Esophagus squamous epithelium (tissue), 5 donors: ENCODE measurements at regions of chr12 and their contacts with region 1.

Region 1: GRCh38 chr12:13211859-13212664 is 15.5 kb downstream of the EMP1 start:
- DNase-seq: no peak
- H3K4me3 ChIP-seq: no peak overlapping the region
- H3K27ac ChIP-seq: peak overlapping the region; percentile 19 to 97 (median 58)
- H3K4me1 ChIP-seq: peaks cover 10 to 58% (median 47%) of the 10 kb centered on the region in 3 donors
- H3K27me3 ChIP-seq: no peaks in the 10 kb centered on the region
- CTCF ChIP-seq: peak; percentile 65 to 74 (median 70)
- POLR2A ChIP-seq: no peak

Region 2: DNA sequence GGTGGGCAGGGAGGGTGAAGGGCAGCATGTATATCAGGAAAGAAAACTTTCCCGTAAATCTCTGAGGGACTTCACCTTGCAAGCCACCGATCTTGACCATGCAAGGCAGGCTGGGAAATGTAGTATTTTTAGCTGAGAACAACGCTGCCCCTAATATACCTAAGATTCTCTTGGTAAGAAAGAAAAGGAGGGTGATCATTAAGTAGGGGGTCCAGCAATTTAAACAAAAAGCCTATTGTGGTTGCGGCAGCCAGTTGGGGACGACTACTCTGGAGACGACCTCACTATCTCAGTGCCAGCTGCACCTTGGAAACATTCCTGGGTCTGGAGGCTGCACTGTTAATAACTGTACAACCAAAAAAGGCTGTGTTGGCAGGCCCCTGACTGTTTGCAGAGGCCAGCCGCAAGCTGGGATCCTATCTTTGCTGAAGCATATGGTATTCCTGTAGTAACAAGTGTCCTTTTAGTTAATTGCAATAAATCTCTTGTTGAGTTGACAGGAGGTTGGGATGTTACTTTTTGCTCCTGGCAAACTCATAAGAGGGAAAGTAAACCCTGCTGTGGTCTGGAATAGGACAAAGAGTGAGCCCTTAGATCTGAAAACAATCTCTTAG is 420.2 kb before region 1 on chr12:
- intact Hi-C with region 1: loop called (anchors 10 kb)
- DNase-seq: no peak
- H3K4me3 ChIP-seq: peak overlapping the region in 3 of 4 donors; percentile 4 to 39 (median 6)
- H3K27ac ChIP-seq: peak overlapping the region in 3 of 4 donors; percentile 30 to 70 (median 53)
- H3K4me1 ChIP-seq: peaks cover 15 to 58% (median 27%) of the 10 kb centered on the region in 3 donors
- H3K27me3 ChIP-seq: no peaks in the 10 kb centered on the region
- CTCF ChIP-seq: no peak
- POLR2A ChIP-seq: no peak

Region 3: GRCh38 chr12:12916135-12916944 is 295.7 kb before region 1 on chr12:
- intact Hi-C with region 1: loop called (anchors 5 kb)
- DNase-seq: peak; percentile 18
- H3K4me3 ChIP-seq: peak overlapping the region in 1 of 4 donors; percentile 42
- H3K27ac ChIP-seq: peak overlapping the region in 3 of 4 donors; percentile 43 to 71 (median 65)
- H3K4me1 ChIP-seq: peaks cover 0 to 15% (median 12%) of the 10 kb centered on the region in 3 donors
- H3K27me3 ChIP-seq: no peaks in the 10 kb centered on the region
- CTCF ChIP-seq: peak; percentile 86 to 99 (median 97)
- POLR2A ChIP-seq: no peak

Region 4: DNA sequence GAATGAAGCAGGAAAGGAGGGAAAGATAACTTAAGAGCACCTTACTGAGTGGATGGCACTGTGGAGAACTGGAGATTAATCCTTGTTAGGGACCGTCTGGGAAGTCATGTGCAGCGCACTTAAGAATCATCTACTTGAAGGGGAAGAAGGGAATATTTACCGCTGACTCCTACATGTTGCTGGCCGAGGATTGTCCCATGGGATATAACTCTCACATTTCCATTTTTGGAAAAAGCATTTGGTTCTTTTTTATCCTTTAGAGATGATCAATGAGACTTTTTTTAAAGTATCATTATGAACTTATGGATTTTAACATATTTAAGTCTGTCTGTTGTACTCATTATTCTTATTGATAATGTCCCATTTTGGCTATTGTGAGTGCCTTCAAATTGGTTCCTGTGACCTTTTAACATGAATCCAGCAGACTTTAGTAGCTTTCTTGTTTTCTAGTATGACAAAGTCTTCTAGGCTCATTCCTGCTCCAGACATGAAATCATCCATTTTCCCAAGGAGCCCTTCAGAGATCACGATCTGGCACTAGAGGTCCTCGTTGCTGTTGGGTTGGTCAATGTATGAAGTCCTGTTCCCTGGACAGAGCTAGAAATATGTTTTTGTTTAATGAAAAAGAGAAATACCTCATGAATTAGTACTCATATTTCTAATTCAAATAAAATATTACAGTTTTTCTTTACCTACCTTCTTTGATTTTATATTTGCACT is 188.1 kb before region 1 on chr12:
- intact Hi-C with region 1: loop called (anchors 10 kb)
- DNase-seq: no peak
- H3K4me3 ChIP-seq: no peak overlapping the region
- H3K27ac ChIP-seq: no peak overlapping the region
- H3K4me1 ChIP-seq: peaks cover 0 to 22% (median 0%) of the 10 kb centered on the region in 3 donors
- H3K27me3 ChIP-seq: no peaks in the 10 kb centered on the region
- CTCF ChIP-seq: peak in 4 of 6 experiments; percentile 26 to 52 (median 32)
- POLR2A ChIP-seq: no peak

Region 5: GRCh38 chr12:13094347-13094746 is 117.7 kb before region 1 on chr12:
- intact Hi-C with region 1: loop called (anchors 5 kb)
- DNase-seq: no peak
- H3K4me3 ChIP-seq: no peak overlapping the region
- H3K27ac ChIP-seq: no peak overlapping the region
- H3K4me1 ChIP-seq: peaks cover 7 to 43% (median 21%) of the 10 kb centered on the region in 3 donors
- H3K27me3 ChIP-seq: no peaks in the 10 kb centered on the region
- CTCF ChIP-seq: no peak
- POLR2A ChIP-seq: no peak